ENCODE measurements at regions of chr15 and their contacts with region 1.

Region 1: DNA sequence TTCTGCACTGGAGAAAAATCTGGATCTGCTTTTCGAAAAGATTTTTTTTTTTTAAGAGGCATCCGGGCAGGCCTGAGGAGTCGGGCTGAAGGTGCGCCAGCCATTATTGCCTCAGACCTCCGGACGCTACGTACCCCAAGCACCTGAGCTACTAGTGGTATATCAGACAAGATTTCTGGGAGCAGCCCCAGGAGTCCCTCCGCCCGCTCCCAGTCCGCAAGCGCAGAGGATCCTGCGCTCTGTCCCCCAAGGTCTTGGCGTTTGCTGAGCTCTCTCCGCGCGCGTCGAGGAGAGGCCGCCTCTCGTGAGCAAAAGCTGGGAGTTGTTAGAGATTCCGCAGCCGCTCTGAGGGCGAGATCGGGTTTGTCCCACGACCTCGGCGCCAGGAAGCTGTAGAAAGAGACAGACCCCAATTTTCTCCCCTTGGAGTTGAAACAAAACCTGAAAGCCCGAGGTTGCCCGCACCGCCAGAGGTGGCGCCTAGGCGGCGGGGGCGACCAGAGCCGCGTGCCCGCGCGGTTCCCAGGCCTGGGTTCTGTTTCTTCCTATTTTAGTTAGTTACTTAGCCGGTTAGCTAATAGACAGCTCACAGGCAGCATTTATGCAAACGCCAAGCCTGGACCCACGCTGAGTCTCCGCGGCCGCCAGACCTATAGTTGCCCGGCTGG is 72.5 kb upstream of the POLG start:
- DNase-seq: no peak
- H3K4me3 ChIP-seq: no peak overlapping the region
- H3K27ac ChIP-seq: no peak overlapping the region
- H3K4me1 ChIP-seq: peaks cover 0 to 6% of the 10 kb centered on the region in 2 donors
- H3K27me3 ChIP-seq: peaks cover 95% of the 10 kb centered on the region
- CTCF ChIP-seq: no peak
- POLR2A ChIP-seq: no peak

Region 2: DNA sequence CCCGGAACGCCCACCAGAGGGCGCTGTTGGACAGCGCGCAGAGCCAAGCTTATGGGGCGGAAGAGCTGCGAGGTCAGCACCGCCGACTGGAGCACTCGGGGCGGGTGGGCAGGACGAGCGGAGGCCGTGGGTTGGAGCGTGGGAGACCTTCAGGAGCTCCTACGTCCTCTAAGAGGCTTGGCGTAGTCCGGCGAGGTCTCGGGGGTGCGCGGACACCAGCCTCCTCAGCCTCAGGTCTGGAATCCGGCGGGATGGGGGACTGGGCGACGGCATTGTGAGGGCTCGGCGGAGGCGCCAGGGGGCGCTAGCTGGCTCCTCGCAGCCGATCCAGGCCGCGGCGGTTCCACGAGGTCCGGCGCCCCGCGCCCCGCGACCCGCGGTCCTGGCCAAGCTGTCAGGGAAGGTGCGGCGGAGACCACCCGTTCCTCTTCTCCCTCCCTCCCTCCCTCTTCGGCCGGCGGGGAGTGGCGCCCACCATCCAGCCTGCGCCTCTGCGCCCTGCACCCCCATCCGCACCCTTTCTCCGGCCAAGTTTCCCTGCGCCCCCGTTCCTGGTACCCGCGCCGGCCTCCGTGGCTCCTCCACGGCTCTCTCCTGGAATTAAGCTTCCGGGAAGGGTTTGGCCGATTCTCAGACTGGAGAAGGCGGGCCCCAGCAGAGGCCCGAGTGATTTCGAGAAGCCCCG is 48.2 kb before region 1 on chr15:
- intact Hi-C with region 1: no loop called
- DNase-seq: peak; percentile 49 to 87 (median 67)
- H3K4me3 ChIP-seq: peak overlapping the region in 2 of 4 donors; percentile 26 to 47
- H3K27ac ChIP-seq: no peak overlapping the region
- H3K4me1 ChIP-seq: peaks cover 4 to 17% of the 10 kb centered on the region in 2 donors
- H3K27me3 ChIP-seq: peaks cover 65% of the 10 kb centered on the region
- CTCF ChIP-seq: peak; percentile 94 to 100 (median 98)
- POLR2A ChIP-seq: no peak

Region 3: DNA sequence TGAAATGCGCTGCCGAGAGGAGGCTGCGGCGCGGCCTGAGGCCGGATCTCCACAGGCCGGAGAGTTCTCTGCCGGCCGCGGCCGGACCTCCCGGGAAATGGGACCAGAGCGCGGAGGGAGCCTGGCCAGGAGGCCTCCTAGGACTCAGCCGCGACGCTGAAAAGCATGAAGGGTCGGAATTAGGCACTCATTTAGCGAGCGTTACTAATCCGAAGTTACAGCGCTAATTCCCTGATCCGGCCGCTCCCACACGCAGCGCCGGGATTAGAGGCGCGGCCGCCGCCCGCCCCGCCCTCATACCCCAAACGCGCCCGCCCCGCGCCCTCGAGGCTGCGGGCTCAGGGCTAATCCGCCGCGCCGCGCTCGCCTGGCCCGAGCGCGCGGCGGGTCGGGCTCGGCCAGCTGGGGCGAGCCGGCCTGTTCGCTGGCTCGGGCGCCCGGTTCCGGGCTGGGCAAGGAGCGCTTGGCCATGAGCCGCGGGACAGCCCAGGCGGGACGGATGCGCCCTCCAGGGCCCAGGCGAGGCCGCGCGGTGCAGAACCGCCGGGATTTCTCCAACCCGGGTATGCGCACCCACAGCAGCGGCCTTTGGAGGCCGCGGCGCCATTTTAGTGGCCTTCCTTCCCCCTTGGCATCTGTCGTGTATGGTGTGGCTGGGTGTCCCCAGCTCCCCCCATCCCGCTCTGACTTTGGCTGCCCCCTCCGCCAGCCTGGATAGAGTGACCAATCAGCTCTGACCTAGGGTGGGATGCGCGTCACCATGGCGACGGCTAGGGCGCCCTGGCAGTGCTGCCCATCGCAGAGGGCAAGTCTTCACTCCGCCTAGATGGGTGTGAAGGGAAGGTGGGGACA is 35.6 kb before region 1 on chr15:
- intact Hi-C with region 1: loop called in 1 of 2 experiments (anchors 5 kb)
- DNase-seq: peak in 1 of 7 donors; percentile 28
- H3K4me3 ChIP-seq: peak overlapping the region in 1 of 4 donors; percentile 26
- H3K27ac ChIP-seq: no peak overlapping the region
- H3K4me1 ChIP-seq: peaks cover 0 to 8% of the 10 kb centered on the region in 2 donors
- H3K27me3 ChIP-seq: peaks cover 95% of the 10 kb centered on the region
- CTCF ChIP-seq: no peak
- POLR2A ChIP-seq: no peak

Measured in adrenal gland (tissue), 19 donors.